K562 (cell line): ENCODE measurements at regions of chr1 and their contacts with region 1.

Region 1: GRCh38 chr1:45339789-45340570 is at the starts of genes MUTYH and TOE1:
- DNase-seq: peak; percentile 98 to 99 (median 98)
- ATAC-seq: peak; percentile 95
- H3K4me3 ChIP-seq: peak within 1 kb of the TSS; percentile 66
- H3K27ac ChIP-seq: peak within 1 kb of the TSS; percentile 94
- H3K4me1 ChIP-seq: peaks cover 6 to 18% of the 10 kb centered on the region in 2 experiments; a peak in 4 of 5 replicates
- H3K27me3 ChIP-seq: no peaks in the 10 kb centered on the region
- CTCF ChIP-seq: no peak
- EP300 ChIP-seq: no peak; the same call in 1 of the 2 replicates
- POLR2A ChIP-seq: peak; percentile 99
- RAD21 ChIP-seq: no peak; a peak in 1 of 4 replicates
- polyA plus RNA-seq, gene MUTYH: 3.4 to 6.2 TPM
- polyA plus RNA-seq, gene TOE1: 59.8 to 85.7 TPM

Region 2: GRCh38 chr1:44730741-44731512 is 609.1 kb before region 1 on chr1 and contains the start of gene RNU5D-1:
- CTCF ChIA-PET with region 1: no interaction called
- POLR2A ChIA-PET with region 1: interaction called, 12 read pairs
- in situ Hi-C with region 1: no loop called
- intact Hi-C with region 1: no loop called
- DNase-seq: peak; percentile 87 to 99 (median 90)
- ATAC-seq: peak; percentile 87
- H3K4me3 ChIP-seq: 0 out of 2 replicates have a peak within 1 kb of the TSS, but pooled peaks have one; percentile 3
- H3K27ac ChIP-seq: peak within 1 kb of the TSS; percentile 100
- H3K4me1 ChIP-seq: peaks cover 11 to 16% of the 10 kb centered on the region in 2 experiments
- H3K27me3 ChIP-seq: no peaks in the 10 kb centered on the region
- CTCF ChIP-seq: peak; percentile 79 to 97 (median 93)
- EP300 ChIP-seq: peak; percentile 80
- POLR2A ChIP-seq: peak; percentile 100
- RAD21 ChIP-seq: peak; percentile 4 to 54
- polyA plus RNA-seq, gene RNU5D-1: not detected

Region 3: DNA sequence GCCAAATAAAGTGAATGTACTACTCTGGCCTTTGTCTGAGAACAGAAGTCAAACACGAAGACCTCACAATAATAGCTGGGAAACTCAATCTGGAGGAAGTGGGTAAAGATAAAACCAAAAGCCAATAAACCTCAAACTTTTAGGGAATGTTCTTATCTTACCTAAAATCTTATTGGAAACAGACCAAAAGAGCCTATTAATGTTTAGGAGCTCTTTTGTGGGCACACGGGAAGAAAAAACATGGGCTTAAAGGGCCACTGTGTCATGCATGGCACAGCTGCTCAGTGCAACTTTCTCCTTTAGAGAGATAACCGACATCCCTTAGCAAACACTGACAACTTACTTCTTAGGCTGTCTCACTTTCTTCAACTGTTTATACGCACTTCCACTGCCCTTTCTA is 369.7 kb before region 1 on chr1:
- CTCF ChIA-PET with region 1: no interaction called
- POLR2A ChIA-PET with region 1: no interaction called
- in situ Hi-C with region 1: no loop called
- intact Hi-C with region 1: no loop called
- DNase-seq: no peak
- ATAC-seq: peak; percentile 61
- H3K4me3 ChIP-seq: no peak overlapping the region
- H3K27ac ChIP-seq: no peak overlapping the region; the same call in 2 of the 3 replicates
- H3K4me1 ChIP-seq: peaks cover 0 to 13% of the 10 kb centered on the region in 2 experiments; a peak in 2 of 5 replicates
- H3K27me3 ChIP-seq: no peaks in the 10 kb centered on the region
- CTCF ChIP-seq: no peak
- EP300 ChIP-seq: no peak
- POLR2A ChIP-seq: no peak
- RAD21 ChIP-seq: no peak

Region 4: DNA sequence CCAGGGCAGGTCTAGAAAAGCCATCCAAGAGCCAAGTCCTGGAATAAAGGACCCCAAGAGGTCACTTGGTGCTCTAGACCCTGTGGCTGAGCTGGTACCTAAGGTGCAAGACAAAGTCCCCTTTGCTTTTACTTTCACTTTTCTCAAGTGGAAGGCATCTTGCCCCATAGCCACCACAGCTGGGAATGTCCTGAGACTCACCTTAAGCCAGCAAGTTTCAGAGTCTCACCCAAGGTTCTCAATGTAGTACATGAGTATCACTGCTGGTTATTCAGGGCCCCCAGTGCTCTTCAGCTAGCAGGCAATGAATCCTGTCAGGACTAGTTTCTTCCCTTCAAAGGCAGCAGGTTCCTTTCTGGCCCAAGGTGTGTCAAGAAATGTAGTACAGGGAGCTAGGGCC is 260.4 kb before region 1 on chr1:
- CTCF ChIA-PET with region 1: no interaction called
- POLR2A ChIA-PET with region 1: no interaction called
- in situ Hi-C with region 1: no loop called
- intact Hi-C with region 1: no loop called
- DNase-seq: no peak
- ATAC-seq: no peak; the same call in 1 of the 3 replicates
- H3K4me3 ChIP-seq: no peak overlapping the region
- H3K27ac ChIP-seq: no peak overlapping the region
- H3K4me1 ChIP-seq: no peaks in the 10 kb centered on the region
- H3K27me3 ChIP-seq: peaks cover 4 to 24% of the 10 kb centered on the region in 2 experiments; a peak in 2 of 5 replicates
- CTCF ChIP-seq: no peak
- EP300 ChIP-seq: no peak
- POLR2A ChIP-seq: no peak
- RAD21 ChIP-seq: no peak

Region 5: GRCh38 chr1:45326627-45327623 is 13.1 kb before region 1 on chr1 and contains the start of gene HPDL:
- CTCF ChIA-PET with region 1: no interaction called
- POLR2A ChIA-PET with region 1: interaction called, 26 read pairs
- in situ Hi-C with region 1: no loop called
- intact Hi-C with region 1: no loop called
- DNase-seq: peak in 3 of 4 experiments; percentile 4 to 41 (median 29)
- ATAC-seq: no peak
- H3K4me3 ChIP-seq: no peak within 1 kb of the TSS
- H3K27ac ChIP-seq: no peak within 1 kb of the TSS
- H3K4me1 ChIP-seq: peaks cover 6 to 36% of the 10 kb centered on the region in 2 experiments; a peak in 3 of 5 replicates
- H3K27me3 ChIP-seq: no peaks in the 10 kb centered on the region
- CTCF ChIP-seq: no peak
- EP300 ChIP-seq: no peak
- POLR2A ChIP-seq: no peak
- RAD21 ChIP-seq: no peak
- polyA plus RNA-seq, gene HPDL: not detected

Region 6: DNA sequence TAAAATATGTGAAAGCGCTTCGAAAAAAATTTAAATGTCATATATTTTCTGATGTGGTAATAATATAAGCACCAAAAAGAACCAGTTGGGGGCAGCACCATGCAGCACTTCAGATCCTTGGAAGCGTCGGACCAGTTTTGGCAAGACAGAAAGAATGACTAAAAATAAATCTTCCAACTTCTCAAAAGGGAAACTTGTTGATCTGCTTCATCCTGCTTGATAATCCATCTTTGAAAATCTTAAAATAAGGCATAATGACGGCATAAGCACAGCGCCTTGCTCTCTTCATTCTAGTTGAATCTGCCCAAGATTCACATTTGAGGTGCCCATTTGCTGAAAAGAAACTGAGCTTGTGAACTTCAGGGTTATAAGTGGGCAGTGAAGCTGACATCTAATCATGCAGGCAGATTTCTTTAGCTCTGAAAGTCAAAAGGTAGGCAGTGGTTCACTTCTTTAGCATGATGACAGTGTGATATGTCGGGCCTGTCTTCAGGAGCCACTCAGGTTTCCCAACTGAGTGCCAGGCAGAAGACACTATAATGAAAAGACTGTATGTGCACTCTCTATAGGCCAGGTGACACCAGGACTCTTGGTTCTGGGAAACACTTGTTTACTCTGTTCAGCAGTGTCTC is 20.0 kb after region 1 on chr1:
- CTCF ChIA-PET with region 1: no interaction called
- POLR2A ChIA-PET with region 1: interaction called, 226 read pairs
- in situ Hi-C with region 1: no loop called
- intact Hi-C with region 1: no loop called
- DNase-seq: peak; percentile 28 to 80 (median 38)
- ATAC-seq: peak; percentile 84
- H3K4me3 ChIP-seq: no peak overlapping the region
- H3K27ac ChIP-seq: no peak overlapping the region
- H3K4me1 ChIP-seq: peaks cover 0 to 3% of the 10 kb centered on the region in 2 experiments; a peak in 2 of 5 replicates
- H3K27me3 ChIP-seq: no peaks in the 10 kb centered on the region
- CTCF ChIP-seq: peak; percentile 74 to 96 (median 78)
- EP300 ChIP-seq: no peak
- POLR2A ChIP-seq: no peak
- RAD21 ChIP-seq: peak; percentile 93 to 98

Region 7: DNA sequence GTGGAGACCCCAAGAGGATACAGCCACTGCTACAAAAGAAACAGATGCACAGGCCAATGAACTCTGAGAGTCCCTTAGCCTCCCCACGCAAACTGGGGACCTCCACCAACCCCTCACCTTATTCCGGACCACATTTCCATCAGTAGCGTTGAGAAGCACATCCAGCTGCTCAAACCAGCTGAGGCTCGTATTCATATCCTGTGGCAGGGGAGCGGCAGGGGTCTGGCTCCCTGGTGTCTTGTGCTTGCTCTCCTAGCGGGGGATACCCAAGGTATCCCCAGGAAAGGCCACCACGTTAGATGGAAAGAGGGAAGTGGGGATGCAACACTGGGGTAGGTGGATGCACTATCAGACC is 159.4 kb after region 1 on chr1:
- CTCF ChIA-PET with region 1: interaction called, 3 read pairs
- POLR2A ChIA-PET with region 1: interaction called, 18 read pairs
- in situ Hi-C with region 1: loop called (anchors 5 kb)
- intact Hi-C with region 1: loop called (anchors 5 kb)
- DNase-seq: peak in 1 of 4 experiments; percentile 55
- ATAC-seq: peak; percentile 3
- H3K4me3 ChIP-seq: peak overlapping the region; percentile 44
- H3K27ac ChIP-seq: peak overlapping the region; percentile 56; the same call in 2 of the 3 replicates
- H3K4me1 ChIP-seq: peaks cover 18 to 19% of the 10 kb centered on the region in 2 experiments; a peak in 4 of 5 replicates
- H3K27me3 ChIP-seq: no peaks in the 10 kb centered on the region
- CTCF ChIP-seq: 0 out of 6 replicates have a peak, but pooled peaks of 1 of the 3 experiments have one; percentile 7
- EP300 ChIP-seq: no peak
- POLR2A ChIP-seq: no peak
- RAD21 ChIP-seq: no peak